B cell (primary cell): ENCODE measurements at regions of chr1 and their contacts with region 1.

Region 1: DNA sequence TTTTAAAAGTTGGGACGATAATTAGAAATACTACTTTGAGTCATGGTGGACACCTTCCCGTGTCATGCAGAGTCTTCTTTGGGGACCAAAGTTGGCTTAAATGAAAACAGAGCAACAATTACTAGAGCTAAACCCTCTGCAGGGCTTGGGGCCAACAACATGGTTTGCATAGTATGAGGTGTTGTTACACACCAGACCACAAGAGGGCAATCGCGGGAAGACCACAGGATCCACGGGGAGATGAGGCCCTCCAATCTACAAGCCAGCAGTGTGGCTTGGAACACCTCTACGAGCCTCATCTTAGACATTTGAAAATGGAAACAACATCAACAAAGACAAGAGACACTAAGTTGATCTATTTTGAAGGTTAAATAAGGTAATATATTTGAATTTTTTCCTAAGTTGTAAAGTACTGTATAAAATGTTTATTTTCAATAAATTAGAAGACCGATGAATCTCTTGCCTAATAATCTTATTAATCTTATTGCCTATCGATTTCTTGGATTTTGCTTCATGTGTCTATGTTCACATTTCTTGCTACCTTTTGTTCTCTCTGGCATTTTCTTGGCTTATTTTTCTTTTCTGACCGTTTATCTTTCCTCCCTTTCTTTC is 8.2 kb upstream of the SMCP start:
- DNase-seq: peak; percentile 64
- ATAC-seq: no peak
- H3K4me3 ChIP-seq: no peak overlapping the region
- H3K4me3 Mint-ChIP-seq: no peak overlapping the region
- H3K27ac ChIP-seq: no peak overlapping the region
- H3K27ac Mint-ChIP-seq: no peak overlapping the region
- H3K4me1 ChIP-seq: peaks cover 0 to 4% of the 10 kb centered on the region in 2 donors
- H3K4me1 Mint-ChIP-seq: peaks cover 2% of the 10 kb centered on the region
- H3K27me3 ChIP-seq: peaks cover 0 to 5% (median 0%) of the 10 kb centered on the region in 4 experiments
- H3K27me3 Mint-ChIP-seq: peaks cover 10% of the 10 kb centered on the region
- CTCF ChIP-seq: peak; percentile 91

Region 2: GRCh38 chr1:152880316-152880715 is 10.4 kb after region 1 on chr1:
- CTCF ChIA-PET with region 1: interaction called, 10 read pairs
- POLR2A ChIA-PET with region 1: no interaction called
- intact Hi-C with region 1: no loop called
- DNase-seq: no peak
- ATAC-seq: no peak
- H3K4me3 ChIP-seq: no peak overlapping the region
- H3K4me3 Mint-ChIP-seq: no peak overlapping the region
- H3K27ac ChIP-seq: no peak overlapping the region
- H3K27ac Mint-ChIP-seq: no peak overlapping the region
- H3K4me1 ChIP-seq: no peaks in the 10 kb centered on the region
- H3K4me1 Mint-ChIP-seq: peaks cover 2% of the 10 kb centered on the region
- H3K27me3 ChIP-seq: peaks cover 0 to 3% (median under 1%) of the 10 kb centered on the region in 4 experiments
- H3K27me3 Mint-ChIP-seq: peaks cover 21% of the 10 kb centered on the region
- CTCF ChIP-seq: no peak

Region 3: GRCh38 chr1:153288634-153289275 is 418.8 kb after region 1 on chr1:
- CTCF ChIA-PET with region 1: interaction called, 13 read pairs
- POLR2A ChIA-PET with region 1: no interaction called
- intact Hi-C with region 1: no loop called
- DNase-seq: peak; percentile 15
- ATAC-seq: no peak
- H3K4me3 ChIP-seq: no peak overlapping the region
- H3K4me3 Mint-ChIP-seq: no peak overlapping the region
- H3K27ac ChIP-seq: no peak overlapping the region
- H3K27ac Mint-ChIP-seq: no peak overlapping the region
- H3K4me1 ChIP-seq: peaks cover 17% of the 10 kb centered on the region in 2 donors
- H3K4me1 Mint-ChIP-seq: peaks cover 24% of the 10 kb centered on the region
- H3K27me3 ChIP-seq: peaks cover 0 to 3% (median 0%) of the 10 kb centered on the region in 4 experiments
- H3K27me3 Mint-ChIP-seq: peaks cover 8% of the 10 kb centered on the region
- CTCF ChIP-seq: peak; percentile 58